ENCODE measurements at regions of chr1 and their contacts with region 1.

Region 1: DNA sequence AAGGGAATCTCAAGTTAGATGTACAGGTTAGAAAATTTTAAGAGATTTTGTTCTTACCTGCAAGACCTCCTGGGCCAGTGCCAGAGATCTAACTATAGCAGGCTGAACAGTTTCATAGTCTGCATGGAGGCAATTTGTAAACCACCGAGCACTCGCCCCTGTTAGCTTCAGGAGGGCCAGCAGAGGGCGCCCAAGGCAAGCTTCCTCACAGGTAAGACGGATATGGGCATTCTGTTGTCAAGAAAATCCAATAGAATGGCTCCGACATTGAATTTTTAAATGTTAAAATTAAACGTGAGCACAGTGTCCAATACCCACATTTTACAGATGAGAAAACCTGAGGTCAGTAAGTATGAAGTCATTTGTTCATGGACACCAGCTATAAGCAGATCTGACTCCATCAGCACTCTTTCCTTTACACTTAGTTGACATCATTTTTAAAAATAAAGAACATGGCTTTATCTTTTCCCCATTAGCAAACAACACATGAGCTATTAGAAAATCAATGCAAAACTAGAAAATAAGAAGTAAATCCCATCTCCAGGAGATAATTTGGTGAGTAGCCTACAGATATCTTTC is 2.2 kb downstream of the REG4 start:
- H3K4me3 ChIP-seq: no peak overlapping the region
- H3K27ac ChIP-seq: no peak overlapping the region
- H3K4me1 ChIP-seq: no peaks in the 10 kb centered on the region
- CTCF ChIP-seq: peak; percentile 62

Region 2: GRCh38 chr1:119743781-119744597 is 65.1 kb before region 1 on chr1:
- CTCF ChIA-PET with region 1: interaction called, 17 read pairs
- POLR2A ChIA-PET with region 1: no interaction called
- H3K4me3 ChIP-seq: no peak overlapping the region
- H3K27ac ChIP-seq: no peak overlapping the region
- H3K4me1 ChIP-seq: no peaks in the 10 kb centered on the region
- CTCF ChIP-seq: peak; percentile 81

Region 3: DNA sequence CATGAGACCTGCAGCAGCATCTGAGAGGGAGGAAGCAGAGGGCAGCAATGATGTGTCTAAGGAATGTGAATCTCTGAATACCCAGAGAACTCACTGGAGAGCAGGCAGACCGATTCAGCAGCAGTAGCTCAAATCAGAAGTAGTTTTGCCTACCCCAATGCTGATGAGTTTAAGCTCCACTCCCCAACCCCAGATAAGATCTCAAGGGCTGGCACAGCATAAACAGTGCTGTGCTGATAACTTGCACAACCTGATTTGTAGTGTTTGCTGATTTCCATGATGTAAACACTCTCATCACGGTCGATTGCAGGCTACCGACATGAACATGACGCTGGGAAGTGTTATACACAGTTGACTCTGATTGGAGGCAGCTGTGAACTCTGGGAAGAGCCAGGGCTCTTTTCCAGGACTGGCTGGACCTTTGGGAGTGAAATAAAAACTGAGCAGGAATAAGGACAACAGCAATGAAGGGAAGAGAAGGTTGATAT is 29.1 kb before region 1 on chr1:
- CTCF ChIA-PET with region 1: interaction called, 11 read pairs
- POLR2A ChIA-PET with region 1: no interaction called
- H3K4me3 ChIP-seq: no peak overlapping the region
- H3K27ac ChIP-seq: peak overlapping the region; percentile 26; the same call in 1 of the 2 replicates
- H3K4me1 ChIP-seq: peaks cover 5% of the 10 kb centered on the region
- CTCF ChIP-seq: no peak

Region 4: DNA sequence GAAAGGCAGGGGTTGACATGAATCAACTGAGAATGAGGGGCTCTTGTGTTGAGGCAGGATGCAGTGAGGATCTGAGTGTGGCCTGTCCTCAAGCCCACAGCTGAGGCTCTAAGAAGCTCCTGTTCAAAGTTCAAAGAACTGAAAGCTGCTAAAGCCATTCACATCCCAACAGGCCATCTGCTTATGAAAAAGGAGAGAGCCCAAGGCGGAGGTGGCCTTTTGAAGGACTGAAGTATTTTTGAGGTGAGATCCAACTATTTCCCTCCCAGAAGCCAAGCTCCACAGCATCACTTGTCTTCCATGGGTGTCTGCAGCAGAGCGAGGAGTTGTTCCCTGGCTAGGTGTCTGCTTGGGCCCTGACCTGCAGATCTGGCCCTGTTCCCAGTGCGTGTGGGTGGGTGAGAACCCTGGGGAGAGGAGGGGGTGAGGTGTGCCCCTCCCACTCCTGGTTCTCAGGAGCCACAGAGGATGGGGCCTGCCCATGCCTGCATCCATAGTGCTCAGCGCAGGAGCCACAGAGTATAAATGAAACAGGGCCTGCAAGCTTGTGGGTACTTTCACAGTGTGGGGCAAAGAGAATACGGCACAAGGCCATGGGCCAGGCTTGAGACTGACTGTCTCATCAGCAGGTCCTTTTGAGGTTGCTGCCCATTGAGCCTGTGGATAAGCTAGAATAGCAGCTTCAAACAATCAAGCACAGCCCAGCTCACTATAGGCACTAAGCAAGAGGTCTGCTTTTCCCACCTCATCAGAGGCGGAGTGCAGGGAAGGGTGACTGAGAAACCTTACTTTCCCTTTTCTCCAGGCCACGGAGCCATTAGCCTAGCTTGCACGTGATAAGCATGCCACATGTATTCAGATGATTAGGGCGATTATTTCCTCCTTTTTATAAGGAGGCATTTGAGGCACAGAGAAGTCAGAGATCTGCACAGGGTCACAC is 13.5 kb before region 1 on chr1:
- CTCF ChIA-PET with region 1: interaction called, 18 read pairs
- POLR2A ChIA-PET with region 1: no interaction called
- H3K4me3 ChIP-seq: no peak overlapping the region
- H3K27ac ChIP-seq: no peak overlapping the region
- H3K4me1 ChIP-seq: no peaks in the 10 kb centered on the region
- CTCF ChIP-seq: no peak

Region 5: DNA sequence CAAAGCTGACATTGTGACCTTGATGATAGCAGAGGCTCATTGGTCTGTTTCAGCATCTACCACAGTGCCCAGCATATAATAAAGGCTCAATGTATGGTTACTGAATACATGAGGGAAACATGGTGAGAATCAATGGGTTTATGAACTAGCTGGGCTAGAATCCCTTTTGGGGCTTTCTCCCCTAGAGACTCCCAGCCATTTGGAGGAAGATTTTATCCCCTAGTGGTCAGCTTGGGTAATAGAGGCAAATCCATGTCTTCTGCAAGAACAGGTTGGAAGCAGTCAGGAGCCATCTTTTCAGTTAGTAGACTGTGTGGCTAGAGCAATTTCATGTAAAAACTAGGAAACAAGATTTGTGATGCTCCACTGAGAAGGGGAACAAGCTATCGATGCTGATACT is 17.9 kb after region 1 on chr1:
- CTCF ChIA-PET with region 1: interaction called, 28 read pairs
- POLR2A ChIA-PET with region 1: no interaction called
- H3K4me3 ChIP-seq: no peak overlapping the region
- H3K27ac ChIP-seq: no peak overlapping the region
- H3K4me1 ChIP-seq: no peaks in the 10 kb centered on the region
- CTCF ChIP-seq: no peak

Region 6: DNA sequence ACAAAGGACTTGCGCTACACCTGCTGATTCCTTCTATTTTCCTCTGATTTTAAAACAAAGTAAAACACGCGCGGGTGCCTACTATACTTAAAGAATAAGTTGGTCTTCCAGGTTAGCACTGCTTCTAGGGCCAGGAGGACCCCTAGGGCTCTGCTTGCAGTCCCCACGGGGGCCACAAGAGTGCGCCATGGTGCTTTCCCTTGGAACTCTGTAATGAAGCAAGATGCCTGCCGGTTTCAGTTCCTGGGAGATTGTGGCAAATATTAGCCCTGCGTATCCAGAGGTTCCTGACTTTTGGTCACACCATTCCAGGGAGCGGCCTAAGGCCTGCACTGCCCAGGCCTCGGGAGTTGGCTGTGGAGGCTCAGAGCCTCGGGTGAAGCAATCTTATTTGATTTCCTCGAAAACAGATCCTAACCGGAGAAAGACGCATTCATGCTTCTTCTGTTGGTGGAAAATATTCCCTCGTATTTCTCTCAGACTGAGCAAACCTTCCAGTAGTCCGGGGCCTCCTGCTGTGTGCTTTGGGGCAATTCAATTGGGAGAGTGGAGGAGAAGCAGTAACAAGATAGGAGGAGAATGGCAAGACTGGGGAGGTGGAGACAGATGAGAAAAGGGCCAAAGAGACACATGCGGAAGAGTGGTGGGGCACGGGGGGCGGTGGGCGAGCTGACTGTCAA is 62.0 kb after region 1 on chr1:
- CTCF ChIA-PET with region 1: interaction called, 21 read pairs
- POLR2A ChIA-PET with region 1: no interaction called
- H3K4me3 ChIP-seq: no peak overlapping the region
- H3K27ac ChIP-seq: no peak overlapping the region
- H3K4me1 ChIP-seq: no peaks in the 10 kb centered on the region
- CTCF ChIP-seq: peak; percentile 78